ENCODE measurements at regions of chr2 and their contacts with region 1.

Region 1: GRCh38 chr2:55779459-55780421 is 86.1 kb upstream of the PNPT1 start:
- DNase-seq: no peak

Region 2: GRCh38 chr2:56009758-56010458 is 230.2 kb after region 1 on chr2:
- intact Hi-C with region 1: loop called (anchors 5 kb)
- DNase-seq: no peak